Esophagus muscularis mucosa (tissue), 4 donors: ENCODE measurements at regions of chr10 and their contacts with region 1.

Region 1: DNA sequence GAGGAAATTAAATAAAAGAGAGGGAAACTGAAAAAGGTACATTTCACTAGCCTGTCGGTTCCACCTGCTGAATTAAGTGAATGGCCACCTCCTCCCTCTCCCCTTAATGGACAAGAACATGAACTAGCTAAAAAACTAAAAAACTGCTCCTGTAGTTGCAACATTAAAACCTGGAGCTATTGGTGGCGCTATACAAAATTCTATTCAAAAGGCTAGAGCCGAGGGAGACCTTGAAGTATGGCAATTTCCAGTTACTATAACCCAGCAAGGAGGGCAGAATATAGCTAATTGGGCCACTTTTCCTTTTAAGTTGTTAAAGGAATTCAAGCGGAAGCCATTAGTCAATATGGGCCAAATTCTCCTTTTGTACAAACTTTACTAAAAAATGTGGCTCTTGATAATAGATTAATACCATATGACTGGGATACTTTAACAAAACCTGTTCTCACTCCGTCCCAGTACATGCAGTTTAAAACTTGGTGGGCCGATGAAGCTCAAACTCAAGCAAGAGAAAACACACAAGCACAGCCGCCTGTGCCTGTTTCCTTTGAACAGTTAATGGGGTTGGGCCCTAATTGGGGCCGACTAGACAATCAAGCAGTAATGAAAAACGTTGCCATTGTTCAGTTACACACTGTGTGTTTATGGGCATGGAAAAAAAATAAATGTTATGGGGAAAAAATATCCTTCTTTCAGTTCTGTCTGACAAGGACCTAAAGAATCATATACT is 6.5 kb upstream of the CHST3 start:
- DNase-seq: no peak
- H3K4me3 ChIP-seq: no peak overlapping the region
- H3K27ac ChIP-seq: no peak overlapping the region
- H3K4me1 ChIP-seq: peaks cover 7 to 11% (median 9%) of the 10 kb centered on the region in 4 donors
- H3K27me3 ChIP-seq: no peaks in the 10 kb centered on the region
- CTCF ChIP-seq: no peak
- EP300 ChIP-seq: no peak
- POLR2A ChIP-seq: no peak

Region 2: GRCh38 chr10:72048450-72049124 is 90.9 kb after region 1 on chr10:
- intact Hi-C with region 1: loop called (anchors 1 kb)
- DNase-seq: peak; percentile 98
- H3K4me3 ChIP-seq: no peak overlapping the region
- H3K27ac ChIP-seq: no peak overlapping the region
- H3K4me1 ChIP-seq: peaks cover 0 to 10% (median 2%) of the 10 kb centered on the region in 4 donors
- H3K27me3 ChIP-seq: no peaks in the 10 kb centered on the region
- CTCF ChIP-seq: peak; percentile 99 to 100 (median 100)
- EP300 ChIP-seq: no peak
- POLR2A ChIP-seq: no peak

Region 3: DNA sequence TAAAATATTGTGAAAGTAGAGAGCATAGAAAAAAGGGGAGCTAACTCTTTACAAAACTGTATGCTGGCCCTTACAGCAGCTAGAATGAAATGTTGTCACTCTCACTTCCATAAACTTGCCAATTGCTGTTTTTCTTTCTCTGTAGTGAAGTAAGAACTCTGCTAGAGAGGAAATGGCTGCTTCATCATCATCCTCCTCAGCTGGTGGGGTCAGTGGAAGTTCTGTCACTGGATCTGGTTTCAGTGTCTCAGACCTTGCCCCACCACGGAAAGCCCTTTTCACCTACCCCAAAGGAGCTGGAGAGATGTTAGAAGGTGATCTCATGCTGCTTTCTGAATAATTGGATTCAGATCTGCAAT is 266.0 kb after region 1 on chr10:
- intact Hi-C with region 1: loop called (anchors 10 kb)
- DNase-seq: no peak
- H3K4me3 ChIP-seq: no peak overlapping the region
- H3K27ac ChIP-seq: peak overlapping the region; percentile 65 to 79 (median 72)
- H3K4me1 ChIP-seq: peaks cover 37 to 81% (median 71%) of the 10 kb centered on the region in 4 donors
- H3K27me3 ChIP-seq: no peaks in the 10 kb centered on the region
- CTCF ChIP-seq: no peak
- EP300 ChIP-seq: no peak
- POLR2A ChIP-seq: no peak